ENCODE measurements at regions of chr3 and their contacts with region 1.

Region 1: GRCh38 chr3:8152821-8153418 is 348.7 kb upstream of the LMCD1 start:
- DNase-seq: peak; percentile 96
- H3K4me3 ChIP-seq: no peak overlapping the region
- H3K27ac ChIP-seq: peak overlapping the region; percentile 70
- H3K4me1 ChIP-seq: peaks cover 34% of the 10 kb centered on the region
- H3K27me3 ChIP-seq: no peaks in the 10 kb centered on the region
- CTCF ChIP-seq: peak; percentile 60

Region 2: DNA sequence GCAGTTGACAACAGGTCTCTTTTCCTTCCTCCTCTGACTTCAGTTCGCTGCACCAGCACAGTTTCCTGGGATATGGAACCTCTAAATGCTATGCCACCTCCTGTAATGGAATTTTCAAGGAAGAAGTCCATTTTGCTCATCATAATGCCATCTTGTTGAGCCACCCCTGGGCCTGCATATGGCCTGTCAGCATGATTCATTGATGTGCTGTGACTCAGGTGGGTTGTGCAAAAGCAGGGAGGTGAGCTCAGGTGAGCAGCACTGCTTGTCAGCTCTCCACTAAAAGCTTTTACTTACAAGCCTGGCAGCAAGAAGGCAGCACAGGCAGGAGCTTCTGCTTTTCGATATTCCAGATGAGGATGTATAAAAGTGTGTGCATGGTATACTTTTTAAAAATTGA is 101.6 kb after region 1 on chr3:
- CTCF ChIA-PET with region 1: no interaction called
- POLR2A ChIA-PET with region 1: interaction called, 17 read pairs
- intact Hi-C with region 1: no loop called
- DNase-seq: no peak
- H3K4me3 ChIP-seq: no peak overlapping the region
- H3K27ac ChIP-seq: peak overlapping the region; percentile 96
- H3K4me1 ChIP-seq: peaks cover 53% of the 10 kb centered on the region
- H3K27me3 ChIP-seq: no peaks in the 10 kb centered on the region
- CTCF ChIP-seq: no peak

Measured in A673 (cell line).